Motor neuron (in vitro differentiated cells): ENCODE measurements at regions of chr20 and their contacts with region 1.

Region 1: DNA sequence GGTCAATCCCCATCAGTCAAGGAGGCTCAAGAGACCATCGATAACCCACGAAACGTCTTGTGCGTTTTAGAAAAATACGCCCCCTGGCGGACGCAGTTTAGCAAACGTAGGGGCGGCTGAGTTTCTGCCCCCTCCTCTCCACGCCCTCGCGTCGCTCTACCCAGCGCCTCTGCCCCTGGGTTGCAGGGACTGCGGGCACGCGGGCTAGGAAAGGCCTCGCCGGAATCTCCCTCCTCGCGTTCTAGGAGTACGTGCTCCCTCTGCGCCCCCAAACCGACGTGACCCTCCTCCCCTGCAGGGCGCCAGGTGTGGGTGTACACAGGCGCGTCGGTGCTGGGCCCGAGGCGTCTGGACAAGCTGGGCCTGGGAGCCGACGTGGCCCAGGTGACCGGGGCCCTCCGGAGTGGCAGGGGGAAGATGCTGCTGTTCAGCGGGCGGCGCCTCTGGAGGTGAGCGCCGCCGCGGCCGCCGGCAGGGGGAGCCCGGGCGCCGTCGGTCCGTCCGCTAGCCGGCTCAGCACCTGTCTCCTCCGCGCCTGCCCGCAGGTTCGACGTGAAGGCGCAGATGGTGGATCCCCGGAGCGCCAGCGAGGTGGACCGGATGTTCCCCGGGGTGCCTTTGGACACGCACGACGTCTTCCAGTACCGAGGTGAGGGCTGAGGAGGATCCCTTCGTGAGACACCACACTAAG is 5.3 kb downstream of the MMP9 start:
- ATAC-seq: peak; percentile 82 to 91 (median 88)
- H3K4me3 ChIP-seq: peak overlapping the region in 2 of 5 donors; percentile 4 to 13
- H3K27ac ChIP-seq: no peak overlapping the region
- H3K4me1 ChIP-seq: no peaks in the 10 kb centered on the region

Region 2: DNA sequence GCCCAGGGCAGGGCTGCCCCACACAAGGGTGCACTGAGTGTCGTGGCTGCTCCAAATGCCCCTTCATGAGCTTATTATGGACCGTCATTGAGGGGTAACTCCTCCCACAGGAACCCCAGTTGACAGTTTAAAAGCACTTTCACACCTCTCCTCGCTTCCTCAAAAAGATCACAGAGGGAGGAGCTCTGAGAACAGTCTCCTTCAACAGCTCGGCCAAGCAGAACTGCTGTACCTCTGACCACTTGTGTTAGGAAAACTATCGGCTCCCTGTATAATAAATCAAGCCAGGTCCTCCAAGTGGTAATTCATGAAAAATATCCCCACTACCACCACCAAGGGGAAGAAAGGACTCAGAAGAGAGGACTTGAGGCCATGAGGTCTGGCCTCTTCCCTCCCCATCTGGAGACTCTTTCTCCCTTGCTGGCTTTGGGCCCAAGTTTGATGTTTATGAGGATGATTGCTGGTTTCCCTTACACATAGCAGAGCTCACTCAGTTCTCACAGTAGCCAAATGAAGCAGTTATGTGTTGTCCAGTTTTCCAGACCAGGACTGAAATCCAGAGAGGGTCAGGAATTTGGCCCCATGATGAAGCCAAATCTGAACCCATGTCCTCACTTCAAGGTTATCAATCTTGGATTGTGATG is 171.7 kb before region 1 on chr20:
- in situ Hi-C with region 1: no loop called
- ATAC-seq: peak in 2 of 8 experiments; percentile 32 to 44
- H3K4me3 ChIP-seq: no peak overlapping the region
- H3K27ac ChIP-seq: no peak overlapping the region
- H3K4me1 ChIP-seq: no peaks in the 10 kb centered on the region

Region 3: DNA sequence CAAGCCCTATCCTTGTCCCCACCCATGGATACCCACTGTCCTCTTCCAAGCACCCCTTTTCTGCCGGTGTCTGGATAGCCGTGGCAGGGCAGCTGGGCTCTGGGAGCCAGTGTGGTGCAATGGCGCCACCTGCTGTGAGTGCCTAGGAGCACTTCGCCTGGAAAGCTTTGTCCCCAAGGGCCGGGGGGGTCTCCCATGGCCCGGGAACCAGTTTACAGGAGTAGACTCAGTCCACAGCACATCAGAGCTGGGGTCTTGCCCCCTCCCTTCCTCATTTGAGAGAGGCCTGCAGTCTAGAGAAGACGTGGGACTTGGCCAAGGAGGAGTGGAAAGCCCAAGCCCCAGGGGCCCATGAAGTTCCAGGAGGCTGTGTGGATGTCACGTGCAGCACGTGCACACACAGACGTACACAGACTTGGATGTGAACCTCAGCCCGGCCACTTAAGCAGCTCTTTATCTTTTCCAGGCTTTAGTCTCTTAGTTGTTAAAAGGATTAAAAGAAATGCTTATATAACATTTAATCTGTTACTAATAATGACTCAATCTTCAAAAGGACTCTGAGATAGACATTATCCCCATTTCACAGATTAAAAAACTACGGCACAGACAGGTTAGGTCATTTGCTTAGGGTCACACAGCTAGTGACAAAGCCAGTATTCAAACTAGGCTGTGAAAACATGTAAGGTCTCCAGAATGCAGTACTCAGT is 335.2 kb after region 1 on chr20:
- in situ Hi-C with region 1: loop called in 1 of 9 experiments (anchors 25 kb)
- ATAC-seq: peak in 5 of 8 experiments; percentile 6 to 44 (median 24)
- H3K4me3 ChIP-seq: no peak overlapping the region
- H3K27ac ChIP-seq: peak overlapping the region; percentile 91 to 97
- H3K4me1 ChIP-seq: peaks cover 52 to 55% of the 10 kb centered on the region in 2 donors